ENCODE measurements at regions of chr9 and their contacts with region 1.

Region 1: DNA sequence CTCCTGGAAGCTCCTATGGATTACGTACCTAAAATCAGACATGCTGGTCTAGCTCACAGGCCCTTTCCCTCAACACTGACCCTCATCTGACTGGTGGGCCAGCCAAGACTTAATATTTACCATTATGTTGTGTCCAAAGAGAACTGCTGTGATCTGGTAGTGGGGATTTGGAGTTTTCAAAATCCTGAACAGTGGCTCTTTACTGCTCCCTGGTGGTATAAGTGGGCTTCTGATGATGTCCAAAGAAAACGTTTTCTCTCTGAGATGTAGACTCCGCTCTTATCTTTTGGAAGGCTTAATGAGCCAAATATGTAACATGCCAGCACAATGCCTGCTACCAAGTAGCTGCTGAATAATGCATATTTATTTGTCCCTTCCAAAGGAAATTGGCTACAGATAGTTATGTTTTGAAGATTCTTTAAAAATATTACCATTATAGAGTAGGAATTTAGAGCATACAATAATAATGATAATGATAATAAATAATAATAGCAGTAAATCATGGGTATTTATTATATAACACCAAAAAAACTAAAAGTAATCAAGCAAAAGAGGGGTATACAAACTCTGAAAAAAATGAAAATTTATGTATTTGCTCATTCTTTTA is 406.6 kb upstream of the TNC start:
- H3K4me3 ChIP-seq: no peak overlapping the region
- H3K27ac ChIP-seq: no peak overlapping the region
- H3K4me1 ChIP-seq: no peaks in the 10 kb centered on the region
- CTCF ChIP-seq: peak; percentile 57; the same call in 1 of the 2 replicates

Region 2: DNA sequence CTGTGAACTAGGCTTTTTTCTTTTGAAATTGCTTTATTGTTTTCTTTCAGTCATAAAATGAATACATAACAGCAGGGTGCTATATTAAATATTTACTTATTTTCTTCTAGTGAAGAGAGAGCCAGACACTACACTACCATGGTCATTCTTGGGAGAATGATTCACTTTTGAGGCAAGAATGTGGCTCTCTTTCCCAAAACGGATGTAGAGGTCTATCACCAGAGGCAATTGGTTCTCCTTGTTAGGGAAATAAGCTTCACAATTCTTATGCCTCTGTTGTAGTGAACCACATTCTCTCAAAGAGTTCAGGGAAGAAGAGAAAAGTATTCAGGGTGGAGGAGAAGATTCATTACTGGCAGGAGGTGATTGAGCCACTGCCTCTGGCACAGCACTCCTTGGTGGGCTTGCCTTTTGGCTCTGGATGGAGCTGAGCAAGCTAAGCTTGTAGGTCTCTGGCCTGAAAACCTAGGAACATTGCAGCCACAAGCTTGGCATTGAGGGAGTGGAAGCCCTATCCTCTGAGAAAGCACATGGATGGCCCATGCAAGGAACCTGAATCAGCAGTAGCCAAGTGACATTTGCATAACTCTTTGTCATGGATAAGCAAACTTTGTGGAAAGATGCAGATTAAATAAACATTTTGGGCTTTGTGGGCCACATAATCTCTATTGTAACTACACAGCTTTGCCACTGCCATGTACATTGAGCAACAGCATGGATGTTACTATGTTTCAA is 227.6 kb before region 1 on chr9:
- CTCF ChIA-PET with region 1: interaction called, 4 read pairs
- POLR2A ChIA-PET with region 1: interaction called, 10 read pairs
- H3K4me3 ChIP-seq: no peak overlapping the region
- H3K27ac ChIP-seq: no peak overlapping the region
- H3K4me1 ChIP-seq: no peaks in the 10 kb centered on the region
- CTCF ChIP-seq: no peak

Measured in HEK293 (cell line).